IMR-90 (cell line): ENCODE measurements at regions of chr10 and their contacts with region 1.

Region 1: GRCh38 chr10:70528726-70529362 is 50.3 kb downstream of the PALD1 start:
- DNase-seq: peak; percentile 65
- ATAC-seq: peak; percentile 91
- H3K4me3 ChIP-seq: no peak overlapping the region
- H3K27ac ChIP-seq: no peak overlapping the region
- H3K4me1 ChIP-seq: no peaks in the 10 kb centered on the region
- H3K27me3 ChIP-seq: peaks cover 8% of the 10 kb centered on the region
- CTCF ChIP-seq: no peak
- POLR2A ChIP-seq: no peak
- RAD21 ChIP-seq: no peak

Region 2: GRCh38 chr10:70212879-70213278 is 316.0 kb before region 1 on chr10:
- CTCF ChIA-PET with region 1: no interaction called
- POLR2A ChIA-PET with region 1: no interaction called
- dilution Hi-C with region 1: no loop called
- in situ Hi-C with region 1: loop called (anchors 10 kb)
- intact Hi-C with region 1: no loop called
- DNase-seq: no peak
- ATAC-seq: no peak
- H3K4me3 ChIP-seq: no peak overlapping the region
- H3K27ac ChIP-seq: no peak overlapping the region
- H3K4me1 ChIP-seq: no peaks in the 10 kb centered on the region
- H3K27me3 ChIP-seq: no peaks in the 10 kb centered on the region
- CTCF ChIP-seq: no peak
- POLR2A ChIP-seq: no peak
- RAD21 ChIP-seq: no peak